ENCODE measurements at regions of chr17 and their contacts with region 1.

Region 1: GRCh38 chr17:44363613-44364159 is at the start of gene FAM171A2:
- DNase-seq: peak; percentile 90
- CTCF ChIP-seq: peak; percentile 67

Region 2: GRCh38 chr17:44053125-44053872 is 310.4 kb before region 1 on chr17:
- CTCF ChIA-PET with region 1: no interaction called
- POLR2A ChIA-PET with region 1: no interaction called
- DNase-seq: no peak
- CTCF ChIP-seq: no peak

Region 3: DNA sequence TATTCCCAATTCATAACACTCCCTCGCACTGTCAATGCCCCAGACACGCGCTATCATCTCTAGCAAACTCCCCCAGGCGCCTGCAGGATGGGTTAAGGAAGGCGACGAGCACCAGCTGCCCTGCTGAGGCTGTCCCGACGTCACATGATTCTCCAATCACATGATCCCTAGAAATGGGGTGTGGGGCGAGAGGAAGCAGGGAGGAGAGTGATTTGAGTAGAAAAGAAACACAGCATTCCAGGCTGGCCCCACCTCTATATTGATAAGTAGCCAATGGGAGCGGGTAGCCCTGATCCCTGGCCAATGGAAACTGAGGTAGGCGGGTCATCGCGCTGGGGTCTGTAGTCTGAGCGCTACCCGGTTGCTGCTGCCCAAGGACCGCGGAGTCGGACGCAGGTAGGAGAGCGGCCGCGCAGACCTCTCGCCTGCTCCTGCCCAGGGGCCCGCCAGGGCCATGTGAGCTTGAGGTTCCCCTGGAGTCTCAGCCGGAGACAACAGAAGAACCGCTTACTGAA is 18.7 kb before region 1 on chr17 and contains the start of gene GRN:
- CTCF ChIA-PET with region 1: interaction called, 250 read pairs
- POLR2A ChIA-PET with region 1: interaction called, 3 read pairs
- DNase-seq: peak; percentile 94
- CTCF ChIP-seq: no peak

Region 4: GRCh38 chr17:44376124-44376523 is 12.4 kb after region 1 on chr17:
- CTCF ChIA-PET with region 1: interaction called, 26 read pairs
- POLR2A ChIA-PET with region 1: no interaction called
- DNase-seq: peak; percentile 73
- CTCF ChIP-seq: peak; percentile 37

Measured in GM10248 (cell line).